Naive thymus-derived CD4-positive, alpha-beta T cell (primary cell): ENCODE measurements at regions of chr14 and their contacts with region 1.

Region 1: GRCh38 chr14:77067632-77068514 is 30.2 kb upstream of the CIPC start:
- DNase-seq: peak; percentile 21 to 59 (median 48)
- ATAC-seq: peak; percentile 79
- H3K4me3 ChIP-seq: no peak overlapping the region
- H3K4me3 Mint-ChIP-seq: no peak overlapping the region
- H3K27ac ChIP-seq: no peak overlapping the region
- H3K27ac Mint-ChIP-seq: peak overlapping the region in 1 of 9 donors; percentile 36
- H3K4me1 ChIP-seq: no peaks in the 10 kb centered on the region
- H3K4me1 Mint-ChIP-seq: peaks cover 0 to 3% (median 0%) of the 10 kb centered on the region in 7 donors
- H3K27me3 ChIP-seq: no peaks in the 10 kb centered on the region
- H3K27me3 Mint-ChIP-seq: peaks cover 0 to 11% (median 4%) of the 10 kb centered on the region in 5 donors

Region 2: GRCh38 chr14:76876076-76876475 is 191.8 kb before region 1 on chr14:
- CTCF ChIA-PET with region 1: interaction called, 204 read pairs
- POLR2A ChIA-PET with region 1: interaction called, 4 read pairs
- intact Hi-C with region 1: loop called (anchors 1 kb)
- DNase-seq: peak in 7 of 9 donors; percentile 23 to 50 (median 37)
- ATAC-seq: peak; percentile 73
- H3K4me3 ChIP-seq: no peak overlapping the region
- H3K4me3 Mint-ChIP-seq: no peak overlapping the region
- H3K27ac ChIP-seq: no peak overlapping the region
- H3K27ac Mint-ChIP-seq: peak overlapping the region in 1 of 9 donors; percentile 69
- H3K4me1 ChIP-seq: no peaks in the 10 kb centered on the region
- H3K4me1 Mint-ChIP-seq: peaks cover 0 to 3% (median 0%) of the 10 kb centered on the region in 7 donors
- H3K27me3 ChIP-seq: no peaks in the 10 kb centered on the region
- H3K27me3 Mint-ChIP-seq: no peaks in the 10 kb centered on the region

Region 3: DNA sequence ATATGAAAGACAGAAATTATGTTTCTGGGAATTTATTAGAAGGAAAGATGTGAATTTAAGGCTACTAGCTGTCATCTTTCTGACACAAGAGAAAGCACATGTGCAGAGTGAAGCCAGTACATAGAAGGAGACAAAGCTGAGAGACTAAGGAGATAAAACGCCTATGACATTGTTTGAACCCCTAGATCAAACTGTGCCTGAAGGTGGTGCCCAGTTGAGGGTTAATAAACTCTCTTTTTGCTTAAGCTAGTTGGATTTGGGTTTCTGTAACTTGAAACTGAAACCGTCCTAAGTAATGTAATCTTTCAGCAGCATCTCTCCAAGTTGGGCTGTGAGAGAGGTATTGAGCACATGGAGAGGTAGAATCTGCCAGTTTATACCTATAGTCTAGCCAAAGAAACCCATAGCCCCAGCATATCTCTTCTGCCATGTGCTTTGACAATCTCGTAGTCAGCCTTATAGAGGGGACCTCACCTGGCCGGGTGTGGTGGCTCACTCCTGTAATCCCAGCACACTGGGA is 157.4 kb before region 1 on chr14:
- CTCF ChIA-PET with region 1: interaction called, 59 read pairs
- POLR2A ChIA-PET with region 1: interaction called, 4 read pairs
- intact Hi-C with region 1: loop called (anchors 1 kb)
- DNase-seq: no peak
- ATAC-seq: no peak
- H3K4me3 ChIP-seq: no peak overlapping the region
- H3K4me3 Mint-ChIP-seq: no peak overlapping the region
- H3K27ac ChIP-seq: no peak overlapping the region
- H3K27ac Mint-ChIP-seq: peak overlapping the region in 2 of 9 donors; percentile 32 to 58
- H3K4me1 ChIP-seq: peaks cover 7 to 22% of the 10 kb centered on the region in 2 donors
- H3K4me1 Mint-ChIP-seq: peaks cover 7 to 52% (median 20%) of the 10 kb centered on the region in 7 donors
- H3K27me3 ChIP-seq: no peaks in the 10 kb centered on the region
- H3K27me3 Mint-ChIP-seq: no peaks in the 10 kb centered on the region

Region 4: DNA sequence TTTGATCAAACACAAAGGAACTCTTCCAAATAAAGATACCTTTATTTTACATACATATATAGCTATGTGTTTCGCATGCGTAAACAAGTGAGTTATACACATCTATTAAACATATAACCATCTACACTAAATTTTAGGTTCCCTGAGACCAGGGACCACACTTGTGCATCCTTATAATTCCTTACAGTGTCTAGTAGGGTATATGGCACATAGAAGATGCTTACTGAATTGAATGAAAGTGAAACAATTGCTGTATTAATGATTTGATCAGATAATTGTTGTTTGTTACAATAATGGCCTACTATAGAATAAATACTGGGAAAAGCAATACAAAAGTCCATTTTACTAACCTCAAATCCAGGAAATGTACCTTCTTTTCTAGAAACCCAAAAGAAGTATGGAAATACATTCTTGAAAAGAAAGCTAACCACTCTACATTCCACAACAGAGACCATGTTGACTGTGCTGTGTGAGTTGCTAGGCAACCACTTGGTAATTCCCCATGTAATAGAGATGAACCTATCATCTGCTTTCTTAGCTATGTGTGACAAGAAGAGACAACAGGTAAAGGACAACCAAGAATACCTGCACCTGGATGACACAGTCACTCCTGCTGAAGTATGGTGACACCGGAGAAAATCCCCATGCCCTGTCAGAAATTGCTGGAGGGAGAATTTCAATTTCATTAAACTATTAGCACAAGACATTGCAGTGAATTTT is 18.3 kb after region 1 on chr14:
- CTCF ChIA-PET with region 1: interaction called, 15 read pairs
- POLR2A ChIA-PET with region 1: no interaction called
- intact Hi-C with region 1: no loop called
- DNase-seq: peak in 5 of 9 donors; percentile 25 to 62 (median 41)
- ATAC-seq: peak; percentile 94
- H3K4me3 ChIP-seq: no peak overlapping the region
- H3K4me3 Mint-ChIP-seq: no peak overlapping the region
- H3K27ac ChIP-seq: no peak overlapping the region
- H3K27ac Mint-ChIP-seq: peak overlapping the region in 5 of 9 donors; percentile 53 to 87 (median 69)
- H3K4me1 ChIP-seq: peaks cover 0 to 9% of the 10 kb centered on the region in 2 donors
- H3K4me1 Mint-ChIP-seq: peaks cover 3 to 19% (median 12%) of the 10 kb centered on the region in 7 donors
- H3K27me3 ChIP-seq: no peaks in the 10 kb centered on the region
- H3K27me3 Mint-ChIP-seq: peaks cover 0 to 18% (median 5%) of the 10 kb centered on the region in 5 donors